Aorta (tissue), 5 donors: ENCODE measurements at regions of chr14 and their contacts with region 1.

Region 1: DNA sequence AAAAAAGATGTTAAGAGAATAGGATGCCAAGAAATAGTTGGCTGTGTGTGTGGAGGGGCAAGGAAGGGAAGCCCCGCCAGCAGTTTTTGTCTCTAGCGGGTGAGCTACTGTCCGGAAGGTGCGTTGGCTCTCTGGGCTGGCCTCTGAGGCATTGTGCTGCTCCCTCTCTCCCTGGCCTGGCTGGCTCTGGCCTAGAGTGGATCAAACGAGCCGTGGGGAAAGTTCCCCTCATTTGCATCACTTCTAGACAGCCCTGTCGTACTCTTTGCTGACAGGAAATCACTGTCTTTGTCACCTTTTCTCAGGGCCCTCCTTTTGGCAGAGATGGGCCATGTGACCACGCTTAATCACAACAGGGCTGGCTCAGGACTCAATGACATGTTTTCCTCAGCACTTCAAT is 236.1 kb upstream of the NPAS3 start:
- DNase-seq: peak; percentile 75 to 83
- ATAC-seq: peak; percentile 90
- H3K4me3 ChIP-seq: no peak overlapping the region
- H3K27ac ChIP-seq: peak overlapping the region; percentile 46 to 87
- H3K4me1 ChIP-seq: peaks cover 3 to 11% of the 10 kb centered on the region in 2 donors
- H3K27me3 ChIP-seq: no peaks in the 10 kb centered on the region

Region 2: DNA sequence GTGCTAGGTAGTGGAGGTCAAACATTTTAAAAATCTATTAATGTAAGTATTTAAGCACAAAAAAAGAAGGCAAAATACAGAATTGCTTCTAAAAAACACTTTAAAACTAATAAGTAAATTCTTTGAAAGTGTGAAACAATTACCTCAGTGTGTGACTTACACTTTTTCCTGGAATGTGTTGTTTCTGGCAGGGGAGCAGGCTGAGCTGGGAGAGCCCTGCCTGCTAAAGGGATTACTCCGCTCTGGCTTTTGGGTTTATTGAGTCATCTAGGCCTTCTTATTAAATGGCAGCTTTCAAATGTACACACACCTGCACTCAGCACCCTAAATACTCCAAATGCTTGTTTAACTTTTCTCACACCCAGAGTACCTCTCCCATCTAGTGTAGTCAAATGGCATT is 93.7 kb before region 1 on chr14:
- intact Hi-C with region 1: loop called in 1 of 2 experiments (anchors 5 kb)
- DNase-seq: no peak
- ATAC-seq: no peak
- H3K4me3 ChIP-seq: no peak overlapping the region
- H3K27ac ChIP-seq: no peak overlapping the region
- H3K4me1 ChIP-seq: peaks cover 6 to 14% of the 10 kb centered on the region in 2 donors
- H3K27me3 ChIP-seq: no peaks in the 10 kb centered on the region